ENCODE measurements at regions of chr2 and their contacts with region 1.

Region 1: DNA sequence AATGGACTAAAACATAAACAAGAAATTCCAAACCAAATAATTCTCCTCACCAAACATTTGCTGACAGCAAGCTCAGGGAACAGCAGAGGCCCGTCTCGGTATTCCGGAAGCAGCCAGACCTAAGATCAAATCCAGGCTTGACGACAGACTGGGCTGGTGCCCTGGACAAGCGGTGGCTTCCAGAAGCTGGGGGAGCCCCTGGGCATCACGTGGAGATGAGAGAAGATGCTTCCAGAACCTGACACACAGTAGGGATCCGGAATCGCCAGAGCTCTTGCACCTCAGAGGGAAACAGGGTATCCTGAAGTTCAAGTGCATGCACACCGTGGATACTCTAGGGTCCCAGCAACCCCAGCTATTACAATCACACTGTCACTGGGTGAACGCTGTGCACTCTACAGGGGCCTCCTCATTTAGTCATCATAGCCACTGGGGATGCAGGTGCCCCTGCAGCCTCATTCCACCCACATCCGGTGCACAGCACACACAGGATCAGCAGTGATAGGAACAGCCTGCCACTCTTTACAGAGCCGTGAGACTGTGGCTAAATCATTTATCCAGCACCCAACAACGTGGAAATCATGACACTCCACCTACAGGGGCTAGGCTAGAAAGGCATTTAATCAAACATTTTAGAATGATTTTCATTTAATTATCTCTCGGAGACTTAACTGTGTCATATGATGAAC is 102.6 kb downstream of the HDAC4 start:
- DNase-seq: peak; percentile 92
- H3K4me3 Mint-ChIP-seq: peak overlapping the region; percentile 81
- H3K27ac Mint-ChIP-seq: peak overlapping the region; percentile 85
- H3K4me1 Mint-ChIP-seq: peaks cover 64% of the 10 kb centered on the region
- H3K27me3 Mint-ChIP-seq: peaks cover under 1% of the 10 kb centered on the region

Region 2: DNA sequence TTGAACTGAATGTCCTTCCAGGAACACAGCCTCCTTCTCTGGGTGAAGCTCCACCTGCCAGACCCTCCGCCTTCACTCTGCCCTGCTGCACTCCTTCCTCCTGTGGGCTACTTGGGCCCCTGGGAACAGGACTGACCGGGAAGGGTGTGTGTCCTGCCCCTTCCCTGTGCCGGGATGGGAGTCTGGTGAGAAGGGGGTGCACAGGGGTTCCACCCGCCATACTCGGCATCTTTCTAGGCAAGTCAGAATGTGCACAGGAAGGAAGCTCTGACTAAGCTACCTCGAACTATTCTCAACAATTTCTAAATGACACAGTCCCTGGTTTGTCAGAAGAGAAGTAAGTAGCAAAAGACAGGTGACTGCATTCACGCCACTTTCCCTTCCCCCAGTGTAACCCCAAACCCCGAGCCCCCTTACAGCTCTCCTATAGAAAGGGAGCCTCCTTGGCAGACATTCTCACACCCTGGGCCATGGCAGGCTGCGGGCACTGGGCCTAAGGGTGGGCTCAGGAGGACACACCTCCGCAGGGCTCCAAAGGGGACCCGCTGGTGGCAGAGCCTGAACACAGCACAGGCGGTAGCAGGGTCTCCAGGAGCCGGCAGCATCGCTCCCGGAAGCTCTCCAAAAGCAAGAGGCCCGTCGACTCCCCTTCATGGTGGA is 81.5 kb before region 1 on chr2:
- intact Hi-C with region 1: loop called (anchors 1 kb)
- DNase-seq: peak; percentile 78
- H3K4me3 Mint-ChIP-seq: peak overlapping the region; percentile 77
- H3K27ac Mint-ChIP-seq: peak overlapping the region; percentile 91
- H3K4me1 Mint-ChIP-seq: peaks cover 43% of the 10 kb centered on the region
- H3K27me3 Mint-ChIP-seq: no peaks in the 10 kb centered on the region

Region 3: GRCh38 chr2:239257511-239257937 is 40.7 kb before region 1 on chr2:
- intact Hi-C with region 1: loop called (anchors 5 kb)
- DNase-seq: no peak
- H3K4me3 Mint-ChIP-seq: peak overlapping the region; percentile 78
- H3K27ac Mint-ChIP-seq: peak overlapping the region; percentile 61
- H3K4me1 Mint-ChIP-seq: peaks cover 74% of the 10 kb centered on the region
- H3K27me3 Mint-ChIP-seq: no peaks in the 10 kb centered on the region

Region 4: GRCh38 chr2:239275044-239275685 is 23.1 kb before region 1 on chr2:
- intact Hi-C with region 1: loop called (anchors 1 kb)
- DNase-seq: peak; percentile 95
- H3K4me3 Mint-ChIP-seq: peak overlapping the region; percentile 79
- H3K27ac Mint-ChIP-seq: peak overlapping the region; percentile 87
- H3K4me1 Mint-ChIP-seq: peaks cover 70% of the 10 kb centered on the region
- H3K27me3 Mint-ChIP-seq: peaks cover 9% of the 10 kb centered on the region

Region 5: GRCh38 chr2:239321596-239322415 is 23.5 kb after region 1 on chr2:
- intact Hi-C with region 1: loop called (anchors 1 kb)
- DNase-seq: peak; percentile 90
- H3K4me3 Mint-ChIP-seq: peak overlapping the region; percentile 69
- H3K27ac Mint-ChIP-seq: peak overlapping the region; percentile 90
- H3K4me1 Mint-ChIP-seq: peaks cover 74% of the 10 kb centered on the region
- H3K27me3 Mint-ChIP-seq: no peaks in the 10 kb centered on the region

Region 6: GRCh38 chr2:239361311-239361642 is 63.0 kb after region 1 on chr2:
- intact Hi-C with region 1: no loop called
- DNase-seq: no peak
- H3K4me3 Mint-ChIP-seq: no peak overlapping the region
- H3K27ac Mint-ChIP-seq: no peak overlapping the region
- H3K4me1 Mint-ChIP-seq: peaks cover 13% of the 10 kb centered on the region
- H3K27me3 Mint-ChIP-seq: no peaks in the 10 kb centered on the region

Measured in activated CD4-positive, alpha-beta T cell treated with anti-CD3 and anti-CD28 coated beads, Interleukin-2, amount 10 ng/mL, durations not matched to agents 24 days and 14 days (primary cell).